MCF 10A (cell line): ENCODE measurements at regions of chr6 and their contacts with region 1.

Region 1: DNA sequence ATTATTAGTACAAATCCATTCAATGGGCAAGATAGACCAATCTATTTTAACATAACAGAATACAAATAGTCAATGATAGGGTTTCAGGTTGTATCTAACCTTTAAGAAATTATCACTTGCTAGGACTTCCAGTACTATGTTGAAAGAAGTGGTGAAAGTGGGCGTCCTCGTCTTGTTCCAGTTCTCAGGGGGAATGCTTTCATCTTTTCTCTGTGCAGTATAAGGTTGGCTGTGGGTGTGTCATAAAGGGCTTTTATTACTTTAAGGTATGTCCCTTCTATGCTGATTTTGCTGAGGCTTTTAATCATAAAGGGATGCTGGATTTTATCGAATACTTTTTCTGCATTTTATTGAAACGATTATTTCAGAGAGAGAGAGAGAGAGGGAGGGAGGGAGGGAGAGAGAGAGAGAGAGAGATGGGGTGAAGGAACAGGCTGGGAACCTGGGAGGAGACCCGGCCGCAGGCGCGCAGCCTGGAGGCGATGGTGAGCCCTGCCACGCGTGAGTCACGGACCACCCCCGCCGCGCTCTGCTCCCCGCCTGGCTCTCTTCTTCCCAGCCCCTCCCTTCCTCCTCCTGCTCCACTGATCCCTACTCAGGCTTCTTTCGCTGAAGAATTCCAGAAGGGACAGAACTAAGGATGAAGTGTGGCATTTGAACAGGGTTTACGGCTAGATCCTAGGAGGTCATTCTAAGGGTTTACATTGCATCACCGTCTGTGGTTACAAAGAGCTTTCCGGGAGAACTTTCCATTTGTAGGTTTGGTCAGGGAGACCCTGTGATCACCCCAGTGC is 45.5 kb upstream of the HLA-E start:
- DNase-seq: peak; percentile 31
- H3K4me3 Mint-ChIP-seq: peak overlapping the region; percentile 36
- H3K27ac Mint-ChIP-seq: no peak overlapping the region
- H3K4me1 Mint-ChIP-seq: peaks cover 9% of the 10 kb centered on the region
- H3K27me3 Mint-ChIP-seq: peaks cover 99% of the 10 kb centered on the region
- CTCF ChIP-seq: no peak

Region 2: DNA sequence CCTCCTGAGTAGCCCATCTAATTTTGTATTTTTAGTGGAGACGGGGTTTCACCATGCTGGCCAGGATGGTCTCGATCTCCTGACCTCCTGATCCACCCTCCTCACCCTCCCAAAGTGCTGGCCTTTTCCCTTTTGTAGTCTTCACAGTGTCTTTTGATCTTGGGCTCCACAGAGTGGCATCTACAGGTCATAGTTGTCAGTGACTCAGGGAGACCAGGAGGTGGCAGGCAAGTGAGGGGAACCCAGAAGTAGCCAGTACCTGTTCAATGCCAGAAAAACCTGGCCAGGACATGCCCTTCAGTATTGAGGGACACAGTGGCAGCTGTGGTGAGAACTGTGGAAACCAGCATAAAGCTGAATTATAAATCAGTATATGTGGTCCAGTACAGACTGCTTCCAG is 79.3 kb before region 1 on chr6:
- CTCF ChIA-PET with region 1: no interaction called
- POLR2A ChIA-PET with region 1: no interaction called
- intact Hi-C with region 1: loop called (anchors 5 kb)
- DNase-seq: peak; percentile 36
- H3K4me3 Mint-ChIP-seq: no peak overlapping the region
- H3K27ac Mint-ChIP-seq: no peak overlapping the region
- H3K4me1 Mint-ChIP-seq: no peaks in the 10 kb centered on the region
- H3K27me3 Mint-ChIP-seq: peaks cover 72% of the 10 kb centered on the region
- CTCF ChIP-seq: no peak